ENCODE measurements at regions of chr1 and their contacts with region 1.

Region 1: GRCh38 chr1:203839059-203839458 is 22.3 kb upstream of the SNRPE start:
- DNase-seq: no peak
- H3K4me3 ChIP-seq: no peak overlapping the region
- H3K27ac ChIP-seq: no peak overlapping the region
- H3K4me1 ChIP-seq: no peaks in the 10 kb centered on the region
- H3K27me3 ChIP-seq: no peaks in the 10 kb centered on the region
- CTCF ChIP-seq: no peak

Region 2: GRCh38 chr1:203534527-203535230 is 304.4 kb before region 1 on chr1:
- CTCF ChIA-PET with region 1: no interaction called
- POLR2A ChIA-PET with region 1: interaction called, 21 read pairs
- intact Hi-C with region 1: no loop called
- DNase-seq: peak; percentile 81 to 95
- H3K4me3 ChIP-seq: no peak overlapping the region
- H3K27ac ChIP-seq: peak overlapping the region; percentile 93
- H3K4me1 ChIP-seq: peaks cover 74% of the 10 kb centered on the region
- H3K27me3 ChIP-seq: no peaks in the 10 kb centered on the region
- CTCF ChIP-seq: no peak

Region 3: GRCh38 chr1:203612932-203613682 is 226.0 kb before region 1 on chr1:
- CTCF ChIA-PET with region 1: no interaction called
- POLR2A ChIA-PET with region 1: no interaction called
- intact Hi-C with region 1: no loop called
- DNase-seq: no peak
- H3K4me3 ChIP-seq: no peak overlapping the region
- H3K27ac ChIP-seq: no peak overlapping the region
- H3K4me1 ChIP-seq: no peaks in the 10 kb centered on the region
- H3K27me3 ChIP-seq: no peaks in the 10 kb centered on the region
- CTCF ChIP-seq: no peak

Region 4: GRCh38 chr1:203789956-203790355 is 49.1 kb before region 1 on chr1:
- CTCF ChIA-PET with region 1: interaction called, 13 read pairs
- POLR2A ChIA-PET with region 1: no interaction called
- intact Hi-C with region 1: no loop called
- DNase-seq: no peak
- H3K4me3 ChIP-seq: no peak overlapping the region
- H3K27ac ChIP-seq: no peak overlapping the region
- H3K4me1 ChIP-seq: peaks cover 18% of the 10 kb centered on the region
- H3K27me3 ChIP-seq: no peaks in the 10 kb centered on the region
- CTCF ChIP-seq: no peak

Region 5: GRCh38 chr1:203795441-203796235 is 43.4 kb before region 1 on chr1 and contains the starts of genes ZBED6 and ZC3H11A:
- CTCF ChIA-PET with region 1: no interaction called
- POLR2A ChIA-PET with region 1: interaction called, 16 read pairs
- intact Hi-C with region 1: no loop called
- DNase-seq: peak; percentile 96 to 98
- H3K4me3 ChIP-seq: peak within 1 kb of the TSS; percentile 70
- H3K27ac ChIP-seq: peak within 1 kb of the TSS; percentile 91
- H3K4me1 ChIP-seq: peaks cover 22% of the 10 kb centered on the region
- H3K27me3 ChIP-seq: no peaks in the 10 kb centered on the region
- CTCF ChIP-seq: no peak
- total RNA-seq, gene ZBED6: 22.7 and 32.7 TPM in 2 replicates
- total RNA-seq, gene ZC3H11A: 91.0 and 91.1 TPM in 2 replicates

Region 6: GRCh38 chr1:203944651-203945404 is 105.8 kb after region 1 on chr1:
- CTCF ChIA-PET with region 1: no interaction called
- POLR2A ChIA-PET with region 1: no interaction called
- intact Hi-C with region 1: no loop called
- DNase-seq: no peak
- H3K4me3 ChIP-seq: no peak overlapping the region
- H3K27ac ChIP-seq: no peak overlapping the region
- H3K4me1 ChIP-seq: no peaks in the 10 kb centered on the region
- H3K27me3 ChIP-seq: no peaks in the 10 kb centered on the region
- CTCF ChIP-seq: no peak

Measured in PC-9 (cell line).